Mammary epithelial cell (primary cell): ENCODE measurements at regions of chr14 and their contacts with region 1.

Region 1: GRCh38 chr14:34227834-34228649 is 234.0 kb downstream of the SPTSSA start:
- DNase-seq: peak; percentile 50
- H3K4me3 ChIP-seq: peak overlapping the region in 1 of 3 experiments; percentile 13
- H3K27ac ChIP-seq: no peak overlapping the region
- H3K4me1 ChIP-seq: peaks cover 3% of the 10 kb centered on the region
- H3K27me3 ChIP-seq: no peaks in the 10 kb centered on the region
- CTCF ChIP-seq: peak; percentile 71 to 80

Region 2: GRCh38 chr14:33839193-33840076 is 388.6 kb before region 1 on chr14:
- CTCF ChIA-PET with region 1: no interaction called
- dilution Hi-C with region 1: no loop called
- in situ Hi-C with region 1: loop called (anchors 10 kb)
- intact Hi-C with region 1: loop called (anchors 1 kb)
- DNase-seq: peak; percentile 24
- H3K4me3 ChIP-seq: no peak overlapping the region
- H3K27ac ChIP-seq: no peak overlapping the region
- H3K4me1 ChIP-seq: peaks cover 16% of the 10 kb centered on the region
- H3K27me3 ChIP-seq: no peaks in the 10 kb centered on the region
- CTCF ChIP-seq: peak; percentile 79 to 90

Region 3: GRCh38 chr14:33938131-33938949 is 289.7 kb before region 1 on chr14:
- CTCF ChIA-PET with region 1: no interaction called
- dilution Hi-C with region 1: no loop called
- in situ Hi-C with region 1: no loop called
- intact Hi-C with region 1: loop called (anchors 10 kb)
- DNase-seq: peak; percentile 45
- H3K4me3 ChIP-seq: no peak overlapping the region
- H3K27ac ChIP-seq: no peak overlapping the region
- H3K4me1 ChIP-seq: peaks cover 5% of the 10 kb centered on the region
- H3K27me3 ChIP-seq: no peaks in the 10 kb centered on the region
- CTCF ChIP-seq: no peak

Region 4: DNA sequence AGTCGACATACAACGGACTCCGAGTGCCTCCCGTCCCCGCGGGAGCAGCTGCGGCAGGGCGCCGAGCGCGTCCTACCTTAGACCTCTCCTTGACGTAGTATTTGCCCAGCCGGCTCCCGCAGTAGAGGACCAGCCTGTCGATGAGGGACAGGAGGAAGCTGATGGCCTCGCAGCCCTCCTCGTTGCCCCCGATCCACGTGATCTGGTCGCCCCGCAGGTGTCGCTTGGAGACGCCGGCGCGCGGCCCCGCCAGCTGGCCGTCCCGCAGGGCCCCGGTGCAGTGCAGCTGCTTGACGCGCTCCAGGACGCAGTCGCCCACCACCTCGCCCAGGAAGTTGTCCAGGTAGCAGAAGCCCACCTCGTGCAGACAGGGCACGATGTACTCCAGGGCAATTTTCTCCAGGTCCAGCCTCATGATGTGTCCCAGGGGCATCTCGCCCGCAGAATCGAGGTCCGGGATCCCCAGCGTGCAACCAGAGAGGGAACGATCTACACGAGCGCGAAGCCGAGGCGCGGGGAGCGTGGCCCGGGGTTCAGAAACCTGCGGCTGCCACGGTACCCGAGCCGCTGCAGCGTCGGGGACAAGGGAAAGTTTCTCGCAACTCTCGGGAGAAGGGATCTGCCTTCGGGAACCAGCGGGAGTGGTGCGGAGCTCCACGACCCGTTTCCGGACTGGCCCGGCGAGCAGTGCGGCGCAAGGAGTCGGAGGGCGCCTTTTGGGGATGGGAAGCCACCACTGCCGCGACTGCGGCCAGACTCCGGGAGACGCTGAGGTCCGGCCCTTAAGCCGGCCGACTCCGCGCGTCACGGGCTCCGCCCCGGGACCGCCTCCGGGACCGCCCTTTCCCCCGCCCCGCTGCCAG is 277.5 kb before region 1 on chr14 and contains the start of gene EGLN3:
- CTCF ChIA-PET with region 1: no interaction called
- dilution Hi-C with region 1: no loop called
- in situ Hi-C with region 1: no loop called
- intact Hi-C with region 1: loop called (anchors 5 kb)
- DNase-seq: peak; percentile 87
- H3K4me3 ChIP-seq: peak within 1 kb of the TSS; percentile 57 to 86 (median 70)
- H3K27ac ChIP-seq: peak within 1 kb of the TSS; percentile 22
- H3K4me1 ChIP-seq: peaks cover 4% of the 10 kb centered on the region
- H3K27me3 ChIP-seq: no peaks in the 10 kb centered on the region
- CTCF ChIP-seq: no peak
- total RNA-seq, gene EGLN3: 8.3 to 9.0 TPM

Region 5: DNA sequence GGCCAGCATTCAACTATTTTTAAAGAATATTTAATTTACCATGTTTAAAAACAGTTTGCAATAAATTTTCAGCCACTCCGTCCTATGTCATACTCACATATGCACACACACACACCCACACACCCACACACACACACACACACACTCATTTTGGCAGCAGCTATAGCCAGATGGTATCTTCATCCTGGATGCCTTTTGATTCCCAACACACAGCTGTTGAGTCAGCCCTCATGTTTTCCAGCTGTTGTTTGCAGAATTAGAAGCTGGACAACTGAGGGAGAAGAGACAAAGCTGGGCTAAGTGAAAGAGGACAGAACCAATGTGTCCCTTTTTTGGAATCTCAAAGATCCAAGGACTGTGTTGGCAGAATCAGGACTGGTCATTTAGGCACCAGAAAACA is 197.2 kb before region 1 on chr14:
- CTCF ChIA-PET with region 1: no interaction called
- dilution Hi-C with region 1: no loop called
- in situ Hi-C with region 1: no loop called
- intact Hi-C with region 1: loop called (anchors 5 kb)
- DNase-seq: peak; percentile 45
- H3K4me3 ChIP-seq: no peak overlapping the region
- H3K27ac ChIP-seq: no peak overlapping the region
- H3K4me1 ChIP-seq: peaks cover 14% of the 10 kb centered on the region
- H3K27me3 ChIP-seq: no peaks in the 10 kb centered on the region
- CTCF ChIP-seq: no peak

Region 6: DNA sequence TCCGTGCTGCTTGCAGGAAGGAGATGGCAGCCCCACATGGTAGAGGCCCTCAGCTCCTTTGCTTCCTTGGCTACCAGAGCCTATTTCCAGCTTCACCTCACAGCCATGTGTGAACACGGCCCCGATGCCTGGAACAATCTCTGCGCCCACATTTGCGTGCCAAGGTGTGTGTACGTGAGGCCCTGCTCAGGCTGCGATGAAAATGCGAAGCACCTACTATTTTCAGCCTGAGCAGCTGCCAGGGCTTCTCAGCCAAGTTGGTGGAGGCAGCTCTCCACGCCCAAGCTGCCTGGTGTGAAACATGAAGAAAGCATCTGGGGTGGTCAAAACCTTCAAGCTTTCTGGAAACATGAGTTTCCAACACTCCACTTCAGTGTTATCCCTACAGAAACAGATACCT is 99.4 kb before region 1 on chr14:
- CTCF ChIA-PET with region 1: no interaction called
- dilution Hi-C with region 1: no loop called
- in situ Hi-C with region 1: no loop called
- intact Hi-C with region 1: no loop called
- DNase-seq: no peak
- H3K4me3 ChIP-seq: no peak overlapping the region
- H3K27ac ChIP-seq: no peak overlapping the region
- H3K4me1 ChIP-seq: no peaks in the 10 kb centered on the region
- H3K27me3 ChIP-seq: no peaks in the 10 kb centered on the region
- CTCF ChIP-seq: no peak

Region 7: GRCh38 chr14:34300882-34301734 is 73.1 kb after region 1 on chr14:
- CTCF ChIA-PET with region 1: no interaction called
- dilution Hi-C with region 1: no loop called
- in situ Hi-C with region 1: no loop called
- intact Hi-C with region 1: loop called (anchors 2 kb)
- DNase-seq: peak; percentile 46
- H3K4me3 ChIP-seq: no peak overlapping the region
- H3K27ac ChIP-seq: no peak overlapping the region
- H3K4me1 ChIP-seq: peaks cover 18% of the 10 kb centered on the region
- H3K27me3 ChIP-seq: no peaks in the 10 kb centered on the region
- CTCF ChIP-seq: peak; percentile 70 to 71